CD4-positive, alpha-beta memory T cell (primary cell): ENCODE measurements at regions of chr5 and their contacts with region 1.

Region 1: GRCh38 chr5:10863763-10864383 is 102.8 kb upstream of the DAP start:
- DNase-seq: peak in 4 of 5 donors; percentile 32 to 43 (median 40)
- H3K4me3 ChIP-seq: no peak overlapping the region
- H3K4me3 Mint-ChIP-seq: peak overlapping the region in 1 of 8 donors; percentile 37
- H3K27ac ChIP-seq: no peak overlapping the region
- H3K27ac Mint-ChIP-seq: no peak overlapping the region
- H3K4me1 ChIP-seq: no peaks in the 10 kb centered on the region
- H3K4me1 Mint-ChIP-seq: peaks cover 0 to 6% (median 2%) of the 10 kb centered on the region in 4 donors
- H3K27me3 ChIP-seq: no peaks in the 10 kb centered on the region
- H3K27me3 Mint-ChIP-seq: peaks cover 2 to 6% of the 10 kb centered on the region in 2 donors

Region 2: GRCh38 chr5:11182441-11183268 is 318.8 kb after region 1 on chr5:
- CTCF ChIA-PET with region 1: no interaction called
- POLR2A ChIA-PET with region 1: no interaction called
- intact Hi-C with region 1: loop called (anchors 2 kb)
- DNase-seq: no peak
- H3K4me3 ChIP-seq: no peak overlapping the region
- H3K4me3 Mint-ChIP-seq: no peak overlapping the region
- H3K27ac ChIP-seq: no peak overlapping the region
- H3K27ac Mint-ChIP-seq: no peak overlapping the region
- H3K4me1 ChIP-seq: no peaks in the 10 kb centered on the region
- H3K4me1 Mint-ChIP-seq: peaks cover 0 to 1% (median 0%) of the 10 kb centered on the region in 4 donors
- H3K27me3 ChIP-seq: no peaks in the 10 kb centered on the region
- H3K27me3 Mint-ChIP-seq: peaks cover 0 to 6% of the 10 kb centered on the region in 2 donors

Region 3: DNA sequence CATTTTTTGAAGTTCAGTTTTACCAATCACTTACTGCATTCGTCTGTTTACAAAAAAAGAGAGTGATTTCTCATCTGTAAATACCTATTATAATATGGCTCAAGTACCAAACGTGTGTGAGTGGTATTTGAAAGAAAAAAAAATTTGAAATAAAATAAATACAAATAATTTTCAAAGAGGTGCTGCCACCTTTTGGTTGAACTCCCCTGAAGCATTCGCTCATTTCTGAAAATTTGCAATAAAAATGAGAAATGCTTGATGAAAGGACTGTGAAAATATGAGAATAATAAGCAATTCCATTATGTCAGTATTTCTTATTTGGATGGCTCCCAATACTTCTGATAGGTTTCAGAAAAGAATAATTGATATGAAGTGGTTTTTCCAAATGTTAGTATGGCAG is 630.5 kb after region 1 on chr5:
- CTCF ChIA-PET with region 1: no interaction called
- POLR2A ChIA-PET with region 1: no interaction called
- intact Hi-C with region 1: loop called (anchors 10 kb)
- DNase-seq: no peak
- H3K4me3 ChIP-seq: no peak overlapping the region
- H3K4me3 Mint-ChIP-seq: no peak overlapping the region
- H3K27ac ChIP-seq: no peak overlapping the region
- H3K27ac Mint-ChIP-seq: no peak overlapping the region
- H3K4me1 ChIP-seq: no peaks in the 10 kb centered on the region
- H3K4me1 Mint-ChIP-seq: no peaks in the 10 kb centered on the region
- H3K27me3 ChIP-seq: no peaks in the 10 kb centered on the region
- H3K27me3 Mint-ChIP-seq: no peaks in the 10 kb centered on the region

Region 4: GRCh38 chr5:12023614-12024241 is 1159.9 kb after region 1 on chr5:
- CTCF ChIA-PET with region 1: no interaction called
- POLR2A ChIA-PET with region 1: no interaction called
- intact Hi-C with region 1: loop called (anchors 10 kb)
- DNase-seq: peak in 2 of 5 donors; percentile 2 to 3
- H3K4me3 ChIP-seq: no peak overlapping the region
- H3K4me3 Mint-ChIP-seq: no peak overlapping the region
- H3K27ac ChIP-seq: no peak overlapping the region
- H3K27ac Mint-ChIP-seq: no peak overlapping the region
- H3K4me1 ChIP-seq: no peaks in the 10 kb centered on the region
- H3K4me1 Mint-ChIP-seq: no peaks in the 10 kb centered on the region
- H3K27me3 ChIP-seq: no peaks in the 10 kb centered on the region
- H3K27me3 Mint-ChIP-seq: peaks cover 0 to 1% of the 10 kb centered on the region in 2 donors